ENCODE measurements at regions of chr11 and their contacts with region 1.

Region 1: DNA sequence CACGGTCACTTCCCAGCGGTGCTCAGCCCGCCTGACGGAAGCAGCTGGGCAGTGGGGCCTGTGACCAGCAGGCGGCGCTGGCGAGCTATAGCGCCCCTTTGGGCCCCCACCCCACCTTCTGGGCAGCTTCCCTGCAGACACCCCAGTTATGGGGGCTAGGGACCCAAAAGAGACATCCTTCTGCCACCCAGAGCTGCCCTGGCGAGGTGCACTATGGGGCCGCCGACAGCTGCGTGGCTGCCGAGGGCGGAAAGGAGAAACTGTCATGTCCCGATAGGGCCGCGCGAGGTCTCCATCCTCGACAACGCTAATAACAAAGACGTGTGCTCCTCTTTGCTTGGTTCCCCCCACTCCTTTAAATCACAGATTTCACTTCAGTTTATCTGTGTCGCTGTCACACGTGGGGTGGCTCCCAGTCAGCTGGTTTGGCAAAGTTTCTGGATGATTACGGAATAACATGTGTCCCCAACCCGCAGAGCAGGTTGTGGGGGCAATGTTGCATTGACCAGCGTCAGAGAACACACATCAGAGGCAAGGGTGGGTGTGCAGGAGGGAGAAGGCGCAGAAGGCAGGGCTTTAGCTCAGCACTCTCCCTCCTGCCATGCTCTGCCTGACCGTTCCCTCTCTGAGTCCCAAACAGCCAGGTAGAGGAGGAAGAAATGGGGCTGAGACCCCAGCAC is 674 bp upstream of the MYO7A start:
- DNase-seq: peak; percentile 55
- H3K4me3 ChIP-seq: peak overlapping the region; percentile 43
- H3K27ac ChIP-seq: no peak overlapping the region
- H3K4me1 ChIP-seq: no peaks in the 10 kb centered on the region
- H3K27me3 ChIP-seq: no peaks in the 10 kb centered on the region
- CTCF ChIP-seq: peak; percentile 100

Region 2: DNA sequence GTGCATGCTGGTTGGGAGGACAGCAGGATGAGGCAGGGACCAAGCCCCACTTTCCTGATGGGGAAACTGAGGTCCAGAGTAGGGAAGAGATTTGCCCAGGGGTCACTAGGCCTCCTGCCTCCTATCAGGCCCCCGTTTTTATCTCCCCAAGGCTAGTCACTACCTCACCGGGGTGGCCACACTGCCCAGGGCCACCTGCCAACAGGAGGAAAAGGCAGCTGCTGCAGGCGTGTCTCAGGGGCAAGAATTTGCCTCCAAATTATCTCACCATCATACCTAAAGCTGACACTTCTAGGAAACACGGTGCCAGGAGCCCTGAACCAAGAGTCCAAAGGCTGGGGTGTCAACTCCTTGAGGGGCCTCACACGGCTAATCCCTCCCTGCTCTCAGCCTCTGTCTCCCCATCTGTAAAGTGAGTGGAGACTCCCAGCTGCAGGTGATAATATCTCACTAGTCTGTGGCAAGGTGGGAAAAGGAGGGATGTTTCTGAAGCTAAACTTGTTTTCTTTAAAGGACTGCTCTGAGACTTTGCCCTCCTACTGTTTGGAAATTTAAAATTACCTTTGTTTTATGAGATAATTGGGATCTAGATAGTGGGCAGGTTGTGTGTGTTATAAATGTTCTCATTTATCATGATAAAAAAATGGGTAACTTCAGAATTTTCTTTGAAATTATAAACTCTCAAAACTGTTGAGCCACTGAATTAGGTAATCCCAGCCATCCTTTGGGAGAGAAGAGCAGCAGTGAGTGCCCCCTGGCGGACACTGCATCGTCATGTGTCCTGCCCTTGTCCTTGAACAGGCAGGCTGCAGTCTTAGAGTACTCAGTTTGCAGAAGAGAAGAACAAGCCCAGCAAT is 60.6 kb after region 1 on chr11:
- CTCF ChIA-PET with region 1: interaction called, 5 read pairs
- POLR2A ChIA-PET with region 1: no interaction called
- intact Hi-C with region 1: loop called (anchors 1 kb)
- DNase-seq: peak; percentile 82
- H3K4me3 ChIP-seq: no peak overlapping the region
- H3K27ac ChIP-seq: no peak overlapping the region
- H3K4me1 ChIP-seq: no peaks in the 10 kb centered on the region
- H3K27me3 ChIP-seq: no peaks in the 10 kb centered on the region
- CTCF ChIP-seq: peak; percentile 98

Region 3: GRCh38 chr11:77547863-77548551 is 420.6 kb after region 1 on chr11:
- CTCF ChIA-PET with region 1: interaction called, 9 read pairs
- POLR2A ChIA-PET with region 1: no interaction called
- intact Hi-C with region 1: loop called (anchors 2 kb)
- DNase-seq: peak; percentile 77
- H3K4me3 ChIP-seq: no peak overlapping the region
- H3K27ac ChIP-seq: no peak overlapping the region
- H3K4me1 ChIP-seq: no peaks in the 10 kb centered on the region
- H3K27me3 ChIP-seq: no peaks in the 10 kb centered on the region
- CTCF ChIP-seq: peak; percentile 79

Region 4: DNA sequence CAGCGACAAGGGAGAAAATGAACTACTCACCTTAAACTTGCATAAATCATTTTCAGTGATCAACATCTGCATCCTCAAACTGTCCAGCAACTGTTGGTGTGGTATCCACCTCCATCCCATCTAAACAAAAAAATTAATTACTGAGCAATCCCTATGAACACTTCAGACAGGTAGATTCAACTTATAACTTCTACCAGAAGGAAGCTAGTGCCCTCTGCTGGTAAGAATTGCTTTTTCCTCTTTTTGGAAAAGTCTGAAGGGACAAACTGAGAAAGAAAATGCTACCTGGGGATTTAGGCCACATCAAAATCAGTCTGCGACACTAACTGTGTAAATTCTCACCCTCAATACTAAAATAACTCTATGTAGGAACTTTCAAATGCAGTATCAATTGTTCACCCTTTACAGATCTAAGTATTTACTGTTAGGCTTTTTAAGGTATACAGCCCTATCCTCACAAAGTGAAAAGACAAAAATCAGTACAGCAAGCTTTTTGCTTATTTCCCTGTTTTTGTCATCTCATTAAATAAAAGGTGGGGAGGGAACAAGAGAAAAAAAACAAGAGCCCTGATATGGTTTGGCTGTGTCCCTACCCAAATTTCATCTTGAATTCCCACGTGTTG is 492.3 kb after region 1 on chr11:
- CTCF ChIA-PET with region 1: interaction called, 3 read pairs
- POLR2A ChIA-PET with region 1: no interaction called
- intact Hi-C with region 1: loop called (anchors 5 kb)
- DNase-seq: peak; percentile 55
- H3K4me3 ChIP-seq: no peak overlapping the region
- H3K27ac ChIP-seq: no peak overlapping the region
- H3K4me1 ChIP-seq: no peaks in the 10 kb centered on the region
- H3K27me3 ChIP-seq: no peaks in the 10 kb centered on the region
- CTCF ChIP-seq: peak; percentile 86